AG04450 (cell line): ENCODE measurements at regions of chr10 and their contacts with region 1.

Region 1: GRCh38 chr10:60434418-60435046 is 44.9 kb upstream of the ANK3 start:
- DNase-seq: no peak
- H3K4me3 ChIP-seq: no peak overlapping the region
- H3K27ac ChIP-seq: no peak overlapping the region
- H3K27me3 ChIP-seq: no peaks in the 10 kb centered on the region
- CTCF ChIP-seq: peak; percentile 72

Region 2: GRCh38 chr10:60099998-60100747 is 334.4 kb before region 1 on chr10:
- CTCF ChIA-PET with region 1: interaction called, 19 read pairs
- POLR2A ChIA-PET with region 1: no interaction called
- DNase-seq: peak; percentile 16
- H3K4me3 ChIP-seq: no peak overlapping the region
- H3K27ac ChIP-seq: no peak overlapping the region
- H3K27me3 ChIP-seq: peaks cover 2% of the 10 kb centered on the region
- CTCF ChIP-seq: peak; percentile 64

Region 3: DNA sequence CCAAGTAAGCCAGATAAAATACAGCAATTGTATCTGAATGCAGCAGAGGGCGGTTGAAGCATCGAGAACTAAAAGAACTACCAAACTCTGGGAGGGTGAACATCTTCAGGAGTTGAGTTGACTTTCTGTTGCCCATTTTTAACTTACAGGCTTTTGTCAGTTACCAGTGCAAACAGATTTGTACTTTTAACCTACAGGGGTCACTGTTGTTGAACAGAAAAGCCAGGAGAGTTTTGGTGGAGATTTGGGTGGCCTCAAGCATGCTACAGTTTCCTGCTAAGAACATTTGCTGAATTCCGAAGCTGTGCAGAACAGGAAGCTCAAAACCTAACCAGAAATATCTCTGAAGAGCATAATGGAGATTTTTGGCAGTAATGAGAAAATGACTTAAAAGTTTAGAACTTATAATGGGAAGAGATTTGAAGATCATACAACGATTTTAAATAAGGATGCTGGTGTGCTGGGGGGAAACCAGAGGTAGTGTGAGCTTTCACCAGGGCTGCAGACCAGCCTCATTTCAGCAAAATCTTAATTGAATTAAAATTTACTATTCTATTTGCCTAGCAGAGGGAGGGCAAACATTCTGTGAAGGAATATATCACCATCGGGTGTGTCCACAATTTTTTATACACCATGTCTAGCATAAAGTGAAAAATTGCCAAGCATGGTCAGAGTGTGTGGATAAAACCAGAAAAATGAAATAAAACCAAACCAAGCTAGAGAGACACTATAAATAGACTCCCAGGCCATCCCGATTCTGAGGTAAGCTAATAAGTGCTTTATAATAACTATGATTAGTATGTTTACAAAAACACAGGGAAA is 319.6 kb before region 1 on chr10:
- CTCF ChIA-PET with region 1: interaction called, 37 read pairs
- POLR2A ChIA-PET with region 1: no interaction called
- DNase-seq: peak; percentile 43
- H3K4me3 ChIP-seq: no peak overlapping the region
- H3K27ac ChIP-seq: no peak overlapping the region
- H3K27me3 ChIP-seq: no peaks in the 10 kb centered on the region
- CTCF ChIP-seq: peak; percentile 69

Region 4: DNA sequence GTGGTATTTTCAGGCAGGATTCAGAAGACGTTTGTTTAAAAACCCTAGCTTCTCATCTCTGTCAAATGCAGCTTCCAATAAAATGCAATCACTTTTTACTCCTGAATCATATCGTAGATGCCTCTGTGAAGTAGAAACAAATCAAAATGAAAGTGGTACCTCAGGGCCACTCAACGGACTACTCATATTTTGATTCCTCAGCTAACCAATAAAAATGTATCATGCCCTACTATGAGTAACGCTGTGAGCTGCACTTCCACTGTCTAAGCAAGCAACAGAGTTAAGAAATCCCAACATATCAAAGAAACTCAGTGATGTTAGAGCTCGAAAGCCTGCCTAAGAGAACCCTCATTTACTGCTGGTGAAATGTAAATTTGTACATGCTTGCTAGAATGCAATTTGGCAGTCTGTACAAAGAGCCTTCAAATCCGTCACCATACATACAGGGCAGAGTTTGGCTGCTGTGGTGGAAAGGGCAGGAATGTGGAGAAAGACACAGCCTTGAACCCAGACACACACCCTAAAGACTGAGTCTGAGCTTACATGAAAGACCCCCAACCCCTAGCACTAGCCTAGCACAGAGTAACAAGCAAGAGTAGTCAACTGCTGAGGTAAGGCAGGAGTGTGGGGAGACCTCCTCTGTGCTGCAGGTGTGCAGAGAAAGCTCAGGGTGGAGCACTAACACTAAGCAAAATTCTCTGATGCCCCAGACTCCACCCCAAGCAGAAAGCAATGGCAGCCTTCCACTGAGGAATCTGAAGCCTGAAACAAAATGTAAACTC is 196.4 kb before region 1 on chr10:
- CTCF ChIA-PET with region 1: interaction called, 52 read pairs
- POLR2A ChIA-PET with region 1: interaction called, 3 read pairs
- DNase-seq: peak; percentile 30
- H3K4me3 ChIP-seq: peak overlapping the region; percentile 21
- H3K27ac ChIP-seq: no peak overlapping the region
- H3K27me3 ChIP-seq: no peaks in the 10 kb centered on the region
- CTCF ChIP-seq: peak; percentile 63